GM18951 (cell line): ENCODE measurements at regions of chr10 and their contacts with region 1.

Region 1: DNA sequence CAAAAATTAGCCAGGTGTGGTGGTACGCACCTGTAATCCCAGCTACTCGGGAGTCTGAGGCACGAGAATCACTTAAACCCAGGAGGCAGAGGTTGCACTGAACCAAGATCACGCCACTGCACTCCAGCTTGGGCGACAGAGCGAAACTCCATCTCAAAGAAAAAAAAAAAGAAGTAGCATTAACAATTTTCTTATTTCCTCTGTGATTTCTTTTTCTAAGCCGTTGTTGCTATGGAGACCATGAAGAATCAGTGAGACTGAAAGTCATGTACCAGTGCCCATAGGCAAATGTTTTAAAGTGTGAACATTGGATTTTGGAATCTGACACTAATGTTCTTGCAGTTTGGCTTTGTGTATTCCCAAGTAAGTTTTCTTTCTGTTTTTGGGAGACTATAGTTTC is 18.4 kb upstream of the MAP3K8 start:
- POLR2A ChIP-seq: no peak

Region 2: DNA sequence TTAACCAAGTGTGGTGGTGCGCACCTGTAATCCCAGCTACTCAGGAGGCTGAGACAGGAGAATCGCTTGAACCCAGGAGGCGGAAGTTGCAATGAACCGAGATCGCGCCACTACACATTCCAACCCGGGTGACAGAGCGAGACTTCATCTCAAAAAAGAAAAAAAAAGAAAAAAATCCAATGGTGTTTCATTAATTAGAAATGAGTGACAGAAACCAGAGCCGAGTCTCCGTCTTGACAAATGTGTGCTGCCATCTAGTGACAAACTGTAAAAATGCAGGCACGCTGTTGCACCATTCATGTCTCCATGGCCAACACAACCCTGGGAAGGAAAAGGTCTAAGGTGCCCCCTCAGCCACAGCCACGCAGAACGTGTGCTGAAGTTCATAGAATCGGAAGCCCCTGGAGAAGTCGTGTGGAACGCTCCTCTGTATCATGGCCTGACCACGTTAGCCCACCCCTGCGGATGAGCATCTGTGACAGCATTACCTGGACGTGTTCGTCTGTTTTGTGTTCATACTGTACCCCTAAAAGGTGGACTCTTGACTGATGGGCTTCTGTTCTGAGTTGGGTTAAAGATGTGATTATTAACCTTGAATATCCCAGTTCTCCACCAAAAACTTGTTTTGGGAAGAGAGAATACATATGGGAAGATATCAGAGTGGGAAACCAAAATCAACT is 119.0 kb after region 1 on chr10:
- in situ Hi-C with region 1: loop called (anchors 5 kb)
- POLR2A ChIP-seq: no peak